ENCODE measurements at regions of chr16 and their contacts with region 1.

Region 1: GRCh38 chr16:50195756-50196155 is 42.6 kb downstream of the TENT4B start:
- DNase-seq: peak; percentile 32
- ATAC-seq: peak; percentile 73
- H3K4me3 ChIP-seq: no peak overlapping the region
- H3K27ac ChIP-seq: peak overlapping the region; percentile 20; the same call in 1 of the 2 replicates
- H3K4me1 ChIP-seq: peaks cover 8% of the 10 kb centered on the region
- H3K27me3 ChIP-seq: no peaks in the 10 kb centered on the region
- CTCF ChIP-seq: no peak
- POLR2A ChIP-seq: no peak
- RAD21 ChIP-seq: no peak

Region 2: DNA sequence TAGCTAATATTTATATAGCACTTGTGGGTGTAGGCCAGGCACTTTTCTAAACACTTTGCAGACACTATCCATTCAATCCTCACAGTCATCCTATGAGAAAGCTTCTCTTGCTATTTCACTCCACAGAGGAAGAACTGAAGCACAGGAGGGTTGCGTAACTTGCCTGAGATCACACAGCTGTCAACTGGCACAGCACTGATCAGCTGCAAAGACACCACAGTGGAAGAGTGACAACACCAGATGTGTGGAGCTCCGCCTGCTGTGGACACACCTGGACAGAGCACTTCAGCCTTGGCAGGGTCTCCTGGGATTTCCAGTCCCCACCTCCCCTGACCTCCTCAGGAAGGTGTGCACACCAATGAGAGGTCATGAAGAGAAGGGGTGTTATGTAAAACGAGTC is 184.0 kb before region 1 on chr16:
- CTCF ChIA-PET with region 1: no interaction called
- POLR2A ChIA-PET with region 1: no interaction called
- dilution Hi-C with region 1: no loop called
- in situ Hi-C with region 1: no loop called
- intact Hi-C with region 1: no loop called
- DNase-seq: no peak
- ATAC-seq: peak; percentile 21; the same call in 1 of the 2 replicates
- H3K4me3 ChIP-seq: no peak overlapping the region
- H3K27ac ChIP-seq: no peak overlapping the region
- H3K4me1 ChIP-seq: no peaks in the 10 kb centered on the region
- H3K27me3 ChIP-seq: no peaks in the 10 kb centered on the region; the same call in 1 of the 2 replicates
- CTCF ChIP-seq: no peak
- POLR2A ChIP-seq: no peak
- RAD21 ChIP-seq: no peak

Region 3: GRCh38 chr16:50152807-50153452 is 42.8 kb before region 1 on chr16 and contains the start of gene TENT4B:
- CTCF ChIA-PET with region 1: interaction called, 3 read pairs
- POLR2A ChIA-PET with region 1: no interaction called
- dilution Hi-C with region 1: no loop called
- in situ Hi-C with region 1: no loop called
- intact Hi-C with region 1: loop called (anchors 2 kb)
- DNase-seq: peak; percentile 66
- ATAC-seq: peak; percentile 90
- H3K4me3 ChIP-seq: peak within 1 kb of the TSS; percentile 97
- H3K27ac ChIP-seq: peak within 1 kb of the TSS; percentile 98
- H3K4me1 ChIP-seq: peaks cover 5% of the 10 kb centered on the region
- H3K27me3 ChIP-seq: no peaks in the 10 kb centered on the region
- CTCF ChIP-seq: no peak
- POLR2A ChIP-seq: peak; percentile 85
- RAD21 ChIP-seq: no peak
- total RNA-seq, gene TENT4B: 7.0 and 12.5 TPM in 2 replicates

Region 4: GRCh38 chr16:50224286-50224685 is 28.5 kb after region 1 on chr16:
- CTCF ChIA-PET with region 1: no interaction called
- POLR2A ChIA-PET with region 1: no interaction called
- dilution Hi-C with region 1: no loop called
- in situ Hi-C with region 1: no loop called
- intact Hi-C with region 1: no loop called
- DNase-seq: peak; percentile 50
- ATAC-seq: peak; percentile 88
- H3K4me3 ChIP-seq: no peak overlapping the region
- H3K27ac ChIP-seq: no peak overlapping the region
- H3K4me1 ChIP-seq: peaks cover 6% of the 10 kb centered on the region
- H3K27me3 ChIP-seq: no peaks in the 10 kb centered on the region
- CTCF ChIP-seq: no peak
- POLR2A ChIP-seq: no peak
- RAD21 ChIP-seq: no peak

Region 5: GRCh38 chr16:50887500-50888298 is 691.9 kb after region 1 on chr16:
- CTCF ChIA-PET with region 1: no interaction called
- POLR2A ChIA-PET with region 1: no interaction called
- dilution Hi-C with region 1: no loop called
- in situ Hi-C with region 1: no loop called
- intact Hi-C with region 1: no loop called
- DNase-seq: no peak
- ATAC-seq: no peak
- H3K4me3 ChIP-seq: no peak overlapping the region
- H3K27ac ChIP-seq: no peak overlapping the region
- H3K4me1 ChIP-seq: no peaks in the 10 kb centered on the region
- H3K27me3 ChIP-seq: no peaks in the 10 kb centered on the region
- CTCF ChIP-seq: no peak
- POLR2A ChIP-seq: no peak
- RAD21 ChIP-seq: no peak

Measured in IMR-90 (cell line).